ENCODE measurements at regions of chr21 and their contacts with region 1.

Region 1: DNA sequence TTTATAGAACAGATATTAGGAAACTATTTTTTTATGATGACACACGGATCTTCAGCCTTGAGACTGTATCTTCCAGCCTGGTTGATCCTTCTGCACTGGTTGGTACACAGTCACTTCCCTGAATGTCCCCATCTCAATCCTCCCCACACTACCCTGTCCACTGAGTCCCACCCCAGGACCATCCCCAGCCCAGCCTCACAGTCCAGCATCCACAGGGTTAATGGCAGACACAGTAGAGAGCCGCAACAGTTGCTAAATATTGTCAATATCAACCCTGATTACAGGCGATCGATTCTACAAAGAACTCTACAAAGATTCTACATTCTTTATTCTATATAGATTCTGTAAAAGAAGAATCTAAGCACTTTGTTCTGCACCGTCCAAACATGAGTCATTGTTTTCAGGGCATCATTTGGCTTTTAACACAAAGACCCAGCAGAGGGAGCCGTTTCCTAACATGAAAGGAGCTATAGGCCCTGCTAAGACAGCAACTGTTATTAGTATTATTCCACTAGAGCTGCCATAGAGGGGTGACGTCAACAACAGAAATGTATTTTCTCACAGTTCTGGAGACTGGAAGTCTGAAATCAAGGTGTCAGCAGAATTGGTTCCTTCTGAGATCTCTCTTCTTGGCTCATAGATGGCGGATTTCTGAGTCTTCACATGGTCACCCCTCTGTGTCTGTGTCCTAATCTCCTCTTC is 30.1 kb upstream of the IFNAR2 start:
- DNase-seq: peak; percentile 76
- H3K4me3 Mint-ChIP-seq: no peak overlapping the region
- H3K27ac Mint-ChIP-seq: no peak overlapping the region
- H3K4me1 Mint-ChIP-seq: peaks cover 18% of the 10 kb centered on the region
- H3K27me3 Mint-ChIP-seq: no peaks in the 10 kb centered on the region
- CTCF ChIP-seq: peak; percentile 35

Region 2: GRCh38 chr21:32834916-32835235 is 364.8 kb before region 1 on chr21:
- CTCF ChIA-PET with region 1: interaction called, 3 read pairs
- intact Hi-C with region 1: loop called (anchors 2 kb)
- DNase-seq: no peak
- H3K4me3 Mint-ChIP-seq: no peak overlapping the region
- H3K27ac Mint-ChIP-seq: no peak overlapping the region
- H3K4me1 Mint-ChIP-seq: no peaks in the 10 kb centered on the region
- H3K27me3 Mint-ChIP-seq: peaks cover 10% of the 10 kb centered on the region
- CTCF ChIP-seq: no peak

Region 3: DNA sequence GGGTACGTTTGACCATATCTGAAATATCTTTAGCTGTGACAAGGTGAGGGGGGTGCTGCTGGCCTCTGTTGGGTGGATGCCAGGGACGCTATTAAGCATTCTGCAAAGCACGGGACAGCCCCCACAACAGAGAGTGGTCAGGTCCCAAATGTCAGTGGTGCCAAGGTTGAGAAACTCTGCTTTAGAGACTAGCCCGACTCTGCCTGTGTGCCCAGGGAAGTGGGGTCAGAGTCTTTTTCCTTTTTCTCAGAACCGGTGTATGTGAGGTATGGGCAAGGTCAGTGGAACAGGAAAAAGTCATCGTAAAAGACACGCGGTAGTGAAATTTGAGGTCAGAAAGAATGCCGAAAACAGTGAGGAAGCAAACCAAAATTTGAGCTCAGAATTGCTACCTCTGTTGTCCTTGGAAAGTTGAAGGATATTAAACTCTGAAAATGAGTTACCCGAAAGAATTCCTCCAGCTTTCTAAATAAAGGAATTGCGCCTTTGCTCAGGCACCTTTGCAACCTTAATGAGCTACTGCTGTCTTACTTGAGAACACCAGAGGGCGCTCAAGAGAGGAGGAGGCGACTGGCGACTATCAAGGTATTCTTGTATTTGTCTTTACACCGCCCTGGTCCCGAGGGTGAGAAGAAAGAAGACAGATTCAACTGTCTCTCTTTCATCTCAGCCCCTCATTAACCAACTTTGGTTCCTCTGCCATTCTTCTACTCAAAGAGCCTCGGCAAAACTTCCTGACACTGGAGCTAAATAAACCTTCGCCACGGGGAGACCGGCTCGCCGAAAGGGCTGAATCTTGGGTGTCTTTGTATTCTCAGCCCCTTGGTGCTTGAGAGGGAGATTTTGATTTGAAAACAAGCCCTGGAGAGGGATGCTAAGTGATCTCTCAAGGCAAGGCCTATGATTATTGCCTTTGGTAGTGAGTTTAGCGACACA is 259.3 kb before region 1 on chr21:
- CTCF ChIA-PET with region 1: interaction called, 7 read pairs
- intact Hi-C with region 1: loop called (anchors 2 kb)
- DNase-seq: peak; percentile 24
- H3K4me3 Mint-ChIP-seq: no peak overlapping the region
- H3K27ac Mint-ChIP-seq: no peak overlapping the region
- H3K4me1 Mint-ChIP-seq: no peaks in the 10 kb centered on the region
- H3K27me3 Mint-ChIP-seq: peaks cover 67% of the 10 kb centered on the region
- CTCF ChIP-seq: peak; percentile 60

Region 4: DNA sequence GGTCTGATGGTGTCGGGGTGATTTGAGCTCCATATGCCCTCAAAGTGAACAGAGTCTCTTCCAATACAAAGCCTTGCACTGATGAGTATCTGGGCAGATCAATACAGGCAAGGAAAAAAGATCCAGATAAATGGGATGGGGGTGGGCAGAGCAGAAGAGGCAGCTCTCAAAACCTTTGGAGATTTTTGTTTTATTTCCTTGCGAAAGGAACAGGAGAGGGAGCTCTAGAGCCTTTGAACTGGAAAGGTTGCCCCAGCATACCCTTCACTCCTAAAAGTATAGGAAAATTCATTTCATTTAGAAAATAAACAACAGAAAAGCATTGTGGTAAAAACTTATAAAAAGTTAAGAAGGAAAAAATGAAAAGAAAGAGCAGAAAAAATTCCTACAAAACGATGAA is 205.4 kb before region 1 on chr21:
- CTCF ChIA-PET with region 1: interaction called, 8 read pairs
- intact Hi-C with region 1: loop called (anchors 2 kb)
- DNase-seq: peak; percentile 16
- H3K4me3 Mint-ChIP-seq: no peak overlapping the region
- H3K27ac Mint-ChIP-seq: no peak overlapping the region
- H3K4me1 Mint-ChIP-seq: no peaks in the 10 kb centered on the region
- H3K27me3 Mint-ChIP-seq: peaks cover 18% of the 10 kb centered on the region
- CTCF ChIP-seq: no peak

Region 5: DNA sequence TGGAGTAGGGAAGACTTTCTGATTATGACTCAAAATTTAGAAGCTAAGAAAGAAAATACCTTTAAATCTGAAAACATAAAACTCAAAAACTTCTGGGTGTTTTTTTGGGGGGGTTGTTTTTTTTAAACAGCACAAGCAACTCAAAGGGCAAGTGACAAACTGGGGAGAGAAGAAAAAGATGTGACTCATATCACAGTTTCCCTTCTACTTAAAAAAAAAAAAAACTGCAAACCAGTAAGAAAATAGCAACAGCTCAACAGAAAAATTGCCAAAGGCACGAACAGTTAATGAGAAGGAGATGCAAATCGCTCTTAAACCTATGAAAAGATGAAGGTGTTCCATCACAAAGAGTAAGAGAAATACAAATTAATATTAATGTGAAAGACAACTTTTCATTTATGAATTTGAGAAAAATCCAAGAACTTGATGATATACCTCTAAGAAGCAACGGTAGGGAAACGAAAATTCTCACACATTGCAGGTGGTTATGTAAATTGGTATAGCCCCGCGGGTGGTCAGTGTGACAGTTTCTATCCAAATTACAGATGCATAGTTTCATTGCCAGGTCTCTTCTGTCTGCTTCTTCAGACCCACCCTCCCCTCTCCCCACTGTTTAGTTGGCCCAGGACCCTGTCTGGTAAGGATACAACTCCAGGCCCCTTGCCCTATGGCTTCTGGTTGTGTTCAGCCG is 39.0 kb after region 1 on chr21:
- CTCF ChIA-PET with region 1: no interaction called
- intact Hi-C with region 1: no loop called
- DNase-seq: no peak
- H3K4me3 Mint-ChIP-seq: no peak overlapping the region
- H3K27ac Mint-ChIP-seq: no peak overlapping the region
- H3K4me1 Mint-ChIP-seq: peaks cover 7% of the 10 kb centered on the region
- H3K27me3 Mint-ChIP-seq: no peaks in the 10 kb centered on the region
- CTCF ChIP-seq: no peak

Region 6: GRCh38 chr21:33266050-33266788 is 66.6 kb after region 1 on chr21 and contains the start of gene IL10RB:
- CTCF ChIA-PET with region 1: interaction called, 8 read pairs
- intact Hi-C with region 1: loop called (anchors 2 kb)
- DNase-seq: peak; percentile 67
- H3K4me3 Mint-ChIP-seq: peak within 1 kb of the TSS; percentile 96
- H3K27ac Mint-ChIP-seq: peak within 1 kb of the TSS; percentile 96
- H3K4me1 Mint-ChIP-seq: peaks cover 46% of the 10 kb centered on the region
- H3K27me3 Mint-ChIP-seq: no peaks in the 10 kb centered on the region
- CTCF ChIP-seq: no peak
- total RNA-seq, gene IL10RB: 16.0 and 18.2 TPM in 2 replicates

Region 7: GRCh38 chr21:33360881-33361602 is 161.4 kb after region 1 on chr21:
- CTCF ChIA-PET with region 1: interaction called, 21 read pairs
- intact Hi-C with region 1: no loop called
- DNase-seq: peak; percentile 83
- H3K4me3 Mint-ChIP-seq: peak overlapping the region; percentile 0
- H3K27ac Mint-ChIP-seq: no peak overlapping the region
- H3K4me1 Mint-ChIP-seq: peaks cover 8% of the 10 kb centered on the region
- H3K27me3 Mint-ChIP-seq: no peaks in the 10 kb centered on the region
- CTCF ChIP-seq: peak; percentile 67

Region 8: GRCh38 chr21:33374450-33375096 is 174.9 kb after region 1 on chr21:
- CTCF ChIA-PET with region 1: no interaction called
- intact Hi-C with region 1: loop called (anchors 2 kb)
- DNase-seq: peak; percentile 63
- H3K4me3 Mint-ChIP-seq: no peak overlapping the region
- H3K27ac Mint-ChIP-seq: peak overlapping the region; percentile 23
- H3K4me1 Mint-ChIP-seq: peaks cover 15% of the 10 kb centered on the region
- H3K27me3 Mint-ChIP-seq: no peaks in the 10 kb centered on the region
- CTCF ChIP-seq: peak; percentile 29

Measured in Calu3 (cell line).